ENCODE measurements at regions of chr1 and their contacts with region 1.

Region 1: DNA sequence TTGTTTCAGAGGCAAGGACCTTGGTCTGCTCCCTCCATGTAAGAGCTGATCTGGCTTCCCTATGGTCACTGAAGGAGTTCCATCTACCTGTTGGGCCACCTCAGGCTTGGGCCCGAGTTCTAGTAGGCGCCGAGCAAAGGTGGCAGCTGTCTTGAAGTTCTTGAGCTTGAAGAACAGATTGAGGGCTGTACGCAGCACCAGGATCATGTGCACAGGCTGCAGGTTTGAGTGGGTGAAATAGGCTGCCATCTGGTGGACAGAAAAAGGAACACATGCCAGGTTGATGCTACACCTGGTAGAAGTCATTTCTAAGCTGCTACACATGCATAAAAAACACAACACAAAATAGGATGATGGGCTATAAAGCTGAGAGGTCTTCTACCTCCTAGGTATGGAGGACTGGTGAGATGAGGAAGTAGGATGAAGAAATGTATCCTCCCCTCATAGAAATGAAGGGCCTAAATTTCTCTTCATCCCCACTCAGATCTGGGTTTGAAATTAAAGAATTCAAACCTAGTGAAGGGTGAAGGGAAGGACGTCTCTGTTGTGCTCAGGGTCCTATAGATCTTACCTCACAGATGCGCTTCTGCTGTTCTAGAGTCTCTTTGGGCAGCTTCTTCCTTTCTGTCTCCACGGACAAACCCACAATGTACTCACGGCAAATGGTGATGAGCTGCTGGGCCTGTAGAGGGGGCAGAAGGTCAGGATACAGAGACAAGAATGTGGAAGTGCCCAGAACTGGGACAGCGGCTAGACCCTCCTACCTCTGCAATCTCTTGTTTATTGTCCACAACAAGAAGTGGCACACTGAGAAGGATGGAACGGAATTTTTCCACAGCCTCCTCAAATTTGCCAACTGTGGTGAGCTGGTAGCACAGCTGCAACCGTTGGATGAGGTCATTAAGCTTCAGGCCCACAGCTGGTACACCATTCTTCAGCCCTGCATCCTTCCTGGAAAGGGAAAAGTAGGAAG is 6.6 kb upstream of the PEX19 start:
- DNase-seq: peak; percentile 24 to 65
- ATAC-seq: peak; percentile 57 to 90 (median 87)
- H3K4me3 ChIP-seq: no peak overlapping the region
- H3K27ac ChIP-seq: peak overlapping the region in 1 of 10 donors; percentile 2
- H3K4me1 ChIP-seq: peaks cover 0 to 5% (median 0%) of the 10 kb centered on the region in 9 donors
- H3K27me3 ChIP-seq: no peaks in the 10 kb centered on the region
- CTCF ChIP-seq: peak; percentile 69 to 87 (median 81)

Region 2: GRCh38 chr1:160251687-160252526 is 39.6 kb before region 1 on chr1:
- intact Hi-C with region 1: no loop called
- DNase-seq: peak in 1 of 2 donors; percentile 78
- ATAC-seq: peak; percentile 88 to 97 (median 93)
- H3K4me3 ChIP-seq: no peak overlapping the region
- H3K27ac ChIP-seq: peak overlapping the region in 6 of 10 donors; percentile 15 to 51 (median 44)
- H3K4me1 ChIP-seq: peaks cover 0 to 54% (median 30%) of the 10 kb centered on the region in 9 donors
- H3K27me3 ChIP-seq: no peaks in the 10 kb centered on the region
- CTCF ChIP-seq: peak; percentile 42 to 84 (median 71)

Region 3: GRCh38 chr1:160328184-160328583 is 36.6 kb after region 1 on chr1:
- intact Hi-C with region 1: loop called in 3 of 10 experiments (anchors 5 kb)
- DNase-seq: no peak
- ATAC-seq: no peak
- H3K4me3 ChIP-seq: no peak overlapping the region
- H3K27ac ChIP-seq: no peak overlapping the region
- H3K4me1 ChIP-seq: peaks cover 0 to 10% (median 0%) of the 10 kb centered on the region in 9 donors
- H3K27me3 ChIP-seq: no peaks in the 10 kb centered on the region
- CTCF ChIP-seq: no peak

Region 4: DNA sequence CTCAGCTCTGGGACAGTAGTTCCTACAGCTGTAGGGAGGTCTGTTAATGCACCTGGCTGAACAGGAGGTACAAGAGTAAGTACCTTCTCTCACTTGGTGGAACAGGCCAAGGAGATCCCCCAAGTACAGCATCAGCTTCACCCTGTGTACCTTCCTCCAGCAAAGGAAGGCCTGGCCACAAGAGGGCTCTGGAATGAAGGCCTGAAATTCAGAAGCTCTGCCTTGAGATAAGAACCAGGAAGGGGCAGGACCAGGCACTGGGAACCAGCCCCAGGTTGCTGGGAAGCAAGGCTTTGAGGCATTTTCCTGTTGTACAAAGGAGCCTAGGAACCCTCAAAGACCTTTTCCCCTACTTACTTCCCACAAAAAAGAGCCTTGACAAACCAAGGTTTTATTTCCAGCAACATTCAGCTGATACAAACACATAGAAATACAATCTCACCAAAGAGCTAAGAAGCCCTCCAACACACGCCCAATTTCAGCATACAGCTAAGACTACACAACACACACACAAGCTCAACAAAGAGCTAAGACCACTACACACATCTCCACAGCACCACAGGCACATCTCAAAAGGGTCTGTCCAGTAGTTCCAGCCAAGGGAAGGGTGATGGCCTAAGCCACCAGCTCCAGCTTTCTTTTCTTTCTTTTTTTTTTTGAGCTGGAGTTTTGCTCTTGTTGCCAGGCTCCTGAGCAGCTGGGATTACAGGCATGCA is 705.9 kb after region 1 on chr1:
- intact Hi-C with region 1: no loop called
- DNase-seq: peak; percentile 45 to 83
- ATAC-seq: peak; percentile 89 to 95 (median 92)
- H3K4me3 ChIP-seq: no peak overlapping the region
- H3K27ac ChIP-seq: peak overlapping the region in 9 of 10 donors; percentile 47 to 82 (median 75)
- H3K4me1 ChIP-seq: peaks cover 0 to 30% (median 12%) of the 10 kb centered on the region in 9 donors
- H3K27me3 ChIP-seq: no peaks in the 10 kb centered on the region
- CTCF ChIP-seq: peak; percentile 43 to 83 (median 68)